ENCODE measurements at regions of chr15 and their contacts with region 1.

Region 1: DNA sequence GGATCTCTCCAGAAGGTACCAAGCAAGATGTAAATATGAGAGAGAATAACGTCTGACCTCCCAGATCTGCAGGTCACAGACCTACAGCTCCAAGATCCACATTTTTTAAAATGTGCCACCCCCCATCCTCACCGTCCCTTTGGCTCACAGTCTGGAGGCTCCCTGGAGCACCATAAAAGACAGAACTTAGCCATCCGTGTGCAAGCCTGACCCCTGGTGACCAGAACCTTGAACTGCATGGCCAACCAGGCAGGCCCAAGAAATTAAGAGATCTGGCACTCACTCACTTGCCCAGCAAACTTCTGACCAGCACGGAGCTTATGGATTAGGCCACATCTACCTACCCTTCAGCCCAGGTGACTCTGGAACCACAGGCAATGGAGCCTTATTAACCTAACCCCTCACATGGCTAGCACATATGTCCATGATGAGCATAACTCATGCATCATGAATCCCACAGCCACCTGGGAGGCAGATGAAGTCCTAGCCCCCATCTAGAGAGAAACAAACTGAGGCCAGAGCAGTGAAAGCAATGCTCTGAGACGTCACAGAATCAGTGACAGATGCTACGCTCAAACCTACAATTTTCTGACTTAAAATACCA is 275.3 kb downstream of the UACA start:
- DNase-seq: peak; percentile 65
- H3K4me3 Mint-ChIP-seq: no peak overlapping the region
- H3K27ac Mint-ChIP-seq: no peak overlapping the region
- H3K4me1 Mint-ChIP-seq: peaks cover 68% of the 10 kb centered on the region
- H3K27me3 Mint-ChIP-seq: peaks cover 41% of the 10 kb centered on the region

Region 2: GRCh38 chr15:69320977-69321554 is 1167.0 kb before region 1 on chr15:
- intact Hi-C with region 1: loop called (anchors 10 kb)
- DNase-seq: no peak
- H3K4me3 Mint-ChIP-seq: no peak overlapping the region
- H3K27ac Mint-ChIP-seq: peak overlapping the region; percentile 50
- H3K4me1 Mint-ChIP-seq: peaks cover 21% of the 10 kb centered on the region
- H3K27me3 Mint-ChIP-seq: peaks cover 40% of the 10 kb centered on the region

Region 3: DNA sequence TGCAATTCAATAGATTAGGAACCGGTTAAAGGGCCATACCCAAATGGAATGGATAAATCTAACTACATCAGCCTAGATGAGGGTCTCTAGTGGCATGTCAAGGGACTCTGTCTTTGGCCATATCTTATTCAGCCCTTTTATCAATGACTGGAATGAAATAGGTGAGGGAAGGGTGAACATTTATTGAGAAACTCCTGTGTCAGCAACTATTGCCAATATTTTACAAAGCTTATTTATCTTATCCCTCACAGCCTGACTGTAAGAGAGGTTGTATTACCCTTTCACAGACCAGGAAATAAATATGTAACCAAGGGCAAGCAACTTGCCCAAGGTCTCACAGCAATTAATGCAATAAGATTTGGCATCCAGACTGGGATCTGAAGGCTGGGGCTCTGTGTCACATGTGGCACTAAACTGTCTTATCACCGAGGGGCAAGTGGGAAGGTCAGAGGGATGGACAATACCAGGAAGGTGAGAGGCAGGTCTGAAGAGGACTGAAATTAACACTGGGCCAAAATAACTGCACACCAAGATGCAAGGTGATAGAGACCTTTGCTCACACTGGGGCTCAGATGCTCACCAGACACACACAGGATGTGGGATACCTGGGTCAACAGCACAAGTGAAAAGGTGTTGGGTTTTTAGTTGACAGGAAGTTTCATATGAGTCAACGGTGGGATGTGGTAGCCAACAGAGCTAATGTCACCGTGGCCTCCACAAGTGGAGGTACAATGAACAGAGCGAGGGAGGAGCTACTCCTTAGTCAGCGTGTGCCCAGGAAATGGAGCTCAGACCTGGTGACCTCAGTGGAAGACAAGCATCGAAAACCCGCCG is 774.2 kb before region 1 on chr15:
- intact Hi-C with region 1: loop called (anchors 1 kb)
- DNase-seq: peak; percentile 83
- H3K4me3 Mint-ChIP-seq: no peak overlapping the region
- H3K27ac Mint-ChIP-seq: peak overlapping the region; percentile 68
- H3K4me1 Mint-ChIP-seq: peaks cover 59% of the 10 kb centered on the region
- H3K27me3 Mint-ChIP-seq: peaks cover 5% of the 10 kb centered on the region

Region 4: GRCh38 chr15:70097337-70098169 is 390.6 kb before region 1 on chr15 and contains the start of gene TLE3:
- intact Hi-C with region 1: loop called (anchors 1 kb)
- DNase-seq: peak; percentile 97
- H3K4me3 Mint-ChIP-seq: peak within 1 kb of the TSS; percentile 99
- H3K27ac Mint-ChIP-seq: peak within 1 kb of the TSS; percentile 97
- H3K4me1 Mint-ChIP-seq: peaks cover 40% of the 10 kb centered on the region
- H3K27me3 Mint-ChIP-seq: peaks cover 18% of the 10 kb centered on the region
- total RNA-seq, gene TLE3: 94.6 and 102 TPM in 2 replicates

Region 5: DNA sequence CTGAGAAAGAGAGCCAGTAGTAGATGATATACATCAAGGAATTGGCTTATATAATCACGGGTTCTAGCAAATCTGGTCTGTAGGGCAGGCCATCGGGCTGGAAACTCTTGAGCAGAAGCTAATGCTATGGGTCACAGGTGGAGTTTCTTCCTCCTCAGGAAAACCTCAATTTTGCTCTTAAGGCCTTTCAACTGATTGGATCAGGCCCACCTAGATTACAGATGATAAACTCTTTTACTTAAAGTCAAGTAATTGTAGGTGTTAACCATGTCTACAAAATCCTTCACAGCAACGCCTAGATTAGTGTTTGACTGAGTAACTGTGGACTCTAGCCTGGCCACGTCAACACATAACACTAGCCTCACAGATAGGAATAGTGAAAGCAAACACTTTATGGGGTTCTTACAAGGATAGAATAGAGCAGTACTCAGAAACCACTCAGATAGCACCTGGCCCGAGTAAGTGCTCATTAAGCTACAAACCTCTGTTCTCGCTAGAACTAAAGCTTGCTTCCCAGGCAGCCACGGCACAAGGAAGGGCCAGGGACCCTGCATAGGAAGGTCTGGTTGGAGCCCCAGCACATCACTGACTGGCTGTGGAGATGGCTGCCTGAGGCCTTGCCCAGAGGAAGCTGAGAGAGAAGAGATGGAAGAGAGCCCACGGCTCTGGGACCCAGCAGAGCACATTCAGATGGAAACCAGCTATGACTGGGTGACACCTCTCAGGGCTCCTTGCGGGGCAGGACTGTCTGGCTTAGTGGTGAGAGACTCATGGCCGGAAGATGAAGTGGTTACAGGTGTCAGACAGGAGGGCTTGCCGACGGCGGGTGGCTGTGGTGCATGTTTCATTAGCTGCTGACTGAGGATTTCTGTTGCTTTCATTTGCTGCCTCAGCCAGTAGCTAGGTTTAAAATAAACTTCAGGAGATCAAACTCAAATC is 187.9 kb before region 1 on chr15:
- intact Hi-C with region 1: loop called (anchors 2 kb)
- DNase-seq: peak; percentile 58
- H3K4me3 Mint-ChIP-seq: no peak overlapping the region
- H3K27ac Mint-ChIP-seq: no peak overlapping the region
- H3K4me1 Mint-ChIP-seq: peaks cover 7% of the 10 kb centered on the region
- H3K27me3 Mint-ChIP-seq: peaks cover 19% of the 10 kb centered on the region

Region 6: GRCh38 chr15:70545526-70545925 is 57.4 kb after region 1 on chr15:
- intact Hi-C with region 1: loop called (anchors 1 kb)
- DNase-seq: no peak
- H3K4me3 Mint-ChIP-seq: no peak overlapping the region
- H3K27ac Mint-ChIP-seq: no peak overlapping the region
- H3K4me1 Mint-ChIP-seq: peaks cover 31% of the 10 kb centered on the region
- H3K27me3 Mint-ChIP-seq: peaks cover 12% of the 10 kb centered on the region